Activated CD8-positive, alpha-beta memory T cell treated with anti-CD3 and anti-CD28 coated beads, Interleukin-2, amount 10 ng/mL, durations not matched to agents 7 days and 5 days (primary cell): ENCODE measurements at regions of chr5 and their contacts with region 1.

Region 1: DNA sequence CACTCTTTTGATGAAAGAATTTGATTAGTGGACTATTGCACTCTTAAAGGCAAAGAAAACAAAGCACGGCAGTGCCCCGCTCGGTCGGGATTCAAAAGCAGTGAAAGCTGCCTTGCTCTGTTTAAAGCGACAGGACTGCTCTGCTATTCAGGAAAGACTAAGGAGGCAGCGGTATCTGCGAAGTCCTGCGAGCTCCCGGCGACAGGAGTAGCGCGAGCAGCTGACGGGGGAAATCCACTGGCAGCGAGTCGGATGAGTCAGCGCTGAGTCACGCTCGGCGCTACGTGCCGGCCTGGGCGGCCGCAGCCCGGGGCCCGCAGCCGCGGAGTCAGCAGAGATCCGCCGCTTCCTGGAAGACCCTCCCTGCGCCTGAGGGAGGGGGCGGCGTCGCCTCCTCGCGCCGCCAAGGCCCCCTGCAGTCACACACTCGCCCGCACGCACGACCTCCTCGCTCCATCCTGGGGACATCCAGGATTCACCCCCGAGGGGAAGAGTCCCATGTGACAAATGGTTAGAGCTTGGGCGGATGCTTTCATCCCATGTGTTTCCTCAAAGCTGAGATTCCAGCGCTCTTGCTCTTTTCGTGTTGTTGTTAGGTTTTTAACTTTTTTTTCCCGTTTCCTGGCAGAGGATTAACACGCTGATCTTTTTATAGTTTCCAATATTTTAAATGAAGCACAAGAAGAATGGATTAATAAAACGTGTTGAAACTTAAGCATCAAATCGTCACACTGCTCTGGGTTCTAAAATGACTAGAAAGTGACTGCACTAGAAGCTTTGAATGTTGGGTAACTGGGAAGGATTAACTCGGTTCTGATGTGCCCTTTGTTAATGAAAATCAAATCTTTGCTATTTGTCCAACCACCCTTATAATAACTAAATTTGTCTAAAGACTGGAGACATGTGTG is 102.5 kb downstream of the ARRDC3 start:
- DNase-seq: peak; percentile 92
- ATAC-seq: peak; percentile 96
- H3K4me3 Mint-ChIP-seq: peak overlapping the region; percentile 83
- H3K27ac Mint-ChIP-seq: peak overlapping the region; percentile 96
- H3K4me1 Mint-ChIP-seq: peaks cover 27% of the 10 kb centered on the region
- H3K27me3 Mint-ChIP-seq: peaks cover 5% of the 10 kb centered on the region

Region 2: DNA sequence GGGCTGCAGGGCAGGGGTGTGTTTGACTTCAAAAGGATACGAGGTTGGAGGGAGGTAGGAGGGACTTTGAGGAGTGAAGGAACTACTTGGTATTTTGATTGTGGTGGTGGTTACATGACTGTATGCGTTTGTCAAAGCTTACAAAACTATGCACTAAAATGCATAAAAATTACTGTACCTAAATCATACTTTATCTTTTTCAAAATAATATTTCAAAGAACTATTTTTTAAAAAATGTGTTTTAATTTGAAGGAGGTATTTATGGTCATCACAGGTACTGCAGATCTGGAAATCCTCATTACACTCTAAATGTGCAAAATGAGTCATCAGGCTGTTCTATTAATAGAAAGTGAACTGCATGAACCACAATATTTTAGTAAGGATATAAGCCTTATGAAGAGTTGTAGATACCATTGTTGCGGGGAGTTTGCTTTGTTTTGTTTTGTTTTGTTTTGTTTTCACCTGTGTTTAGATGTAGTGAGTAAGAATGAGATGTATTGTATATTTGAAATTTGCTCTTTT is 14.4 kb before region 1 on chr5:
- CTCF ChIA-PET with region 1: interaction called, 13 read pairs
- DNase-seq: no peak
- ATAC-seq: peak; percentile 87
- H3K4me3 Mint-ChIP-seq: no peak overlapping the region
- H3K27ac Mint-ChIP-seq: peak overlapping the region; percentile 63
- H3K4me1 Mint-ChIP-seq: peaks cover 28% of the 10 kb centered on the region
- H3K27me3 Mint-ChIP-seq: peaks cover 4% of the 10 kb centered on the region

Region 3: DNA sequence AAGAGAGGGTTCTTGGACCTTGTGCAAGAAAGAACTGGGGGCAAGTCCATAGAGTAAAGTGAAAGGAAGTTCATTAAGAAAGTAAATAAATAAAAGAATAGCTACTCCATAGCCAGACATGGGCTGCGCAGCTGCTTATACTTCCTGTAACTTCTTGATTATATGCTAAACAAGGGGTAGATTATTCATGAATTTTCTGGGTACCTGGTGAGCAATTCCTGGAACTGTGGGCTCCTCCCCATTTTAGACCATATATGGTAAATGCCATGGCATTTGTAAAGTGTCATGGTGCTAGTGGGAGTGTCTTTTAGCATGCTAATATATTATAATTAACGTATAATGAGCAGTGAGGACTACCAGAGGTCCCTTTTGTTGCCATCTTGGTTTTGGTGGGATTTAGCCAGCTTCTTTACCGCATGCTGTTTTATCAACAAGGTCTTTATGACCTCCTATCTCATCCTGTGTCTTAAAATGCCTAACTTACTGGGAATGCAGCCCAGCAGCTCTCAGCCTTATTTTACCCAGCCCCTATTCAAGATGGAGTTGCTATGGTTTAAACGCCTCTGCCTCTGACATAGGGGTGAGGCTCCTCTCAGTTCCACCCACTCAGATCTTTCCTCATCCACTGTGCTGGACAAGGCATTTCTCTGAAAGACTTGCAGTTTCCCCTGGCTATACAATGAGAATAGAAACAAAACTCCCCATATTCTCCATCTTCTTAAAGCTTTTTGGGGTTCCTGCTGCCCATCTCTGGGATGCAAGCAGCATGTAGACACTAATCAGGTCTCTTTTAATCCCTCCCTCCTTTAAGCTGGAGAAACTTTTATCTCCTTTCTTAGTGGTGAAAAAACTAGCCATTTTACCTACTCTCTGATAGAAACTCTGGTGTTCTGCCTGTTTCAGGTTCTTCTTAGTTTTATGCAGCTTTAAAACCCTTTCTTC is 11.3 kb after region 1 on chr5:
- CTCF ChIA-PET with region 1: interaction called, 12 read pairs
- DNase-seq: no peak
- ATAC-seq: no peak
- H3K4me3 Mint-ChIP-seq: no peak overlapping the region
- H3K27ac Mint-ChIP-seq: no peak overlapping the region
- H3K4me1 Mint-ChIP-seq: peaks cover 25% of the 10 kb centered on the region
- H3K27me3 Mint-ChIP-seq: no peaks in the 10 kb centered on the region

Region 4: GRCh38 chr5:91311697-91312501 is 31.3 kb after region 1 on chr5:
- CTCF ChIA-PET with region 1: interaction called, 10 read pairs
- DNase-seq: peak; percentile 88
- ATAC-seq: peak; percentile 72
- H3K4me3 Mint-ChIP-seq: peak overlapping the region; percentile 61
- H3K27ac Mint-ChIP-seq: peak overlapping the region; percentile 94
- H3K4me1 Mint-ChIP-seq: peaks cover 50% of the 10 kb centered on the region
- H3K27me3 Mint-ChIP-seq: no peaks in the 10 kb centered on the region